ENCODE measurements at regions of chr2 and their contacts with region 1.

Region 1: DNA sequence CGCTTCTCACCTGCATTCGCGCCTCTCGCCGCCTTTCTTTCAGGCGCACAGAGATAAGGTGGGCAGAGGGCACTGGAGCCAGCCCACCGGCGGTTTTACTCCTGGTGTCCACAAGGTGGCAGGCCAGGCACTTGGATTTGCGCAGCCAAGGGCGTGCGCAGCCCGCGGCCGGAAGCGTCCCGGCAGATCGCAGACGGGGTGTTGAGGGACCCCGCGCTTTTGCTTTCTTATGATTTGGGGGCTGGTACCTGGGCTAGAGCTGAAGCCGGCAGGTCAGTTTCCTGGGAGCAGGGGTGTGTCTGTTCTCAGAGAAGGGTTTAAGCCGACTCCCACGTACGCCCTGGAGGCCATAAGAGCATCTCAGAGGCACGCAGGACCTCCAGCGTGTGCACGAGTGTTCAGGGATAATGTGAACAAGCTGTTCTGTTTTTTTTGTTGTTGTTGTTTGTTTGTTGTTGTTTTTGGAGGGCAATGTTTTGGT is 305.6 kb upstream of the CXCR4 start:
- DNase-seq: peak; percentile 93

Region 2: GRCh38 chr2:136638193-136638592 is 214.6 kb after region 1 on chr2:
- intact Hi-C with region 1: loop called in 1 of 2 experiments (anchors 5 kb)
- DNase-seq: no peak

Region 3: DNA sequence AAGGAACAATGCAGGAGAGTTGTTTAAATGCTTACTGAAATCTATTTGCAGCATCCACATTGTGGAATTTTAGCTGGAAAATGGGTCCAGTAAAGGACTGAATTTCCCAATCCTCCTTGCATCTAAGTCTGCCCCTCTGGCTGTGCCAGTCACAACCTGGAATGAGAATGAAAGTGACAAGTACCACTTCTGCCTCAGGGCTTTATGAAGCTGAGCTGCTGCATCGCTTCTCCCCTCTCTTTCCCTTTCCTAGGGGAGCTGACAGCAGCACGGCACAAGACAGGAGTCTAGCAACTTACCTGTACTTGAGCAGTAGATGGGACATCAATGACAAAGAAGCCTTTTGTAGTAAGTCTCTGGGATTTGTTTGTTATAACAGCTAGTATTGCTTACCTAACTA is 314.5 kb after region 1 on chr2:
- intact Hi-C with region 1: loop called in 1 of 2 experiments (anchors 10 kb)
- DNase-seq: no peak

Region 4: GRCh38 chr2:137838255-137839092 is 1414.9 kb after region 1 on chr2:
- intact Hi-C with region 1: loop called (anchors 5 to 10 kb)
- DNase-seq: no peak

Measured in posterior vena cava (tissue), 2 donors.